ENCODE measurements at regions of chr18 and their contacts with region 1.

Region 1: GRCh38 chr18:6746386-6746960 is 17.0 kb downstream of the ARHGAP28 start:
- DNase-seq: no peak
- H3K4me3 ChIP-seq: no peak overlapping the region
- H3K27ac ChIP-seq: no peak overlapping the region
- H3K27me3 ChIP-seq: no peaks in the 10 kb centered on the region
- CTCF ChIP-seq: no peak

Region 2: DNA sequence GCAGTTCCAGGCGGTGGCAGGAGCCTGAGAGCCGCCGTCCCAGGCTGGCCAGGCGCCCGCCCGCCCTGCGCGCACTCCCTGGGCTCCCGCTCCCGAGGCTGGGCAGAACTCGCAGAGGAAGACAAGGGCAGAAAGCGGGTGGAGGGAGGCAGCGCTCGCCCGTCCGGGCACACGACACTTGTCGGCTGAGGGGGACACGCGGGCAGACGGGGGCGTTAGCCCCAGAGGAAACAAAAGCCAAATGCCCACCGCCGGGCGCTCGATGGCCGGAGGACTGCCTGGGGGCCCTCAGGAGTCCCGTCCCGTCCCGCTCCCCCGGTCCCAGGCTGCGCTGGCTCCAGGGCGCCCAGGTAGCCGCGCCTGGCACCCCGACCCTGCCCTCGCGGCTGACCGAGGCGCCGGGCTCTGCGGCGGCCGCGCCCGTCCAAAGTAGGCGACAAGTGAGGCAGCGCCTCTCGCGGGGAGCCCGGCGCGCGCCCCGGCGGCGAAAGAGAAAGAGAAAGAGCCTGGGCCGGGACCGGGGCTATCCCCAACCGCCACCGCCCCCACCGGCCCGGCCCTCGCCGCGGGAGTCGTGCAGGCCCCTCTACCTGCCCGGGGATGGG is 332.3 kb before region 1 on chr18:
- CTCF ChIA-PET with region 1: interaction called, 10 read pairs
- POLR2A ChIA-PET with region 1: no interaction called
- DNase-seq: no peak
- H3K4me3 ChIP-seq: peak overlapping the region; percentile 39
- H3K27ac ChIP-seq: no peak overlapping the region
- H3K27me3 ChIP-seq: peaks cover 20% of the 10 kb centered on the region
- CTCF ChIP-seq: no peak

Region 3: GRCh38 chr18:6785411-6785810 is 38.9 kb after region 1 on chr18:
- CTCF ChIA-PET with region 1: no interaction called
- POLR2A ChIA-PET with region 1: no interaction called
- DNase-seq: no peak
- H3K4me3 ChIP-seq: no peak overlapping the region
- H3K27ac ChIP-seq: no peak overlapping the region
- H3K27me3 ChIP-seq: no peaks in the 10 kb centered on the region
- CTCF ChIP-seq: no peak